ENCODE measurements at regions of chr6 and their contacts with region 1.

Region 1: DNA sequence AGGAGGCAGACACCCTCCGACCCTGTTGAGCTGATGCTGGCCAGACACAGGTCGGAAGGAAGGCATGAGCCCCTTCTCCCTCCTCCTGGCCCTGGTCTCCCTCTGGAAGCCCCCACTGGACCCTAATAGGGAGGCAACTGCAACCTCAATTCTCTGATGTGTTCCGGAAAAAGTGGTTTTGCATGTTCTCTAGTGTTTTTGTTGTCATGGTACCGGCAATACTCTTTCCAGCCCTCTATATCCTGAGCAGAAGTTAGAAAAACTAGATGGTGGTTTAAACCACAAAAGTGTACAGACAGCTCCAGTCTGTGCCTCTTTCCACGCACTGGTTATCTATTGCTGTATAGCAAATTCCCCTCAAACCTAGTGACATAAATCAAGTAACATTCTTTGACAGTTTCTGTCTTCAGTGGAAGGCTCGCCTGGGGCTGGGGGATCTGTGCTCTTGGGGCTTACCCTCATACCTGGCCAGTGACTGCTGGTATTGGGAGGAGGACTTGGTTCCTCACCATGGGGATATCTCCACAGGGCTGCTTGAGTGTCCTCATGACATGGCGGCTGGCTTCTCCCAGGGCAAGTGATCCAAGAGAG is 37.0 kb downstream of the SYTL3 start:
- DNase-seq: no peak
- ATAC-seq: peak in 2 of 4 donors; percentile 34 to 52
- H3K4me3 ChIP-seq: no peak overlapping the region
- H3K27ac ChIP-seq: no peak overlapping the region
- H3K4me1 ChIP-seq: no peaks in the 10 kb centered on the region
- H3K27me3 ChIP-seq: no peaks in the 10 kb centered on the region
- CTCF ChIP-seq: no peak

Region 2: DNA sequence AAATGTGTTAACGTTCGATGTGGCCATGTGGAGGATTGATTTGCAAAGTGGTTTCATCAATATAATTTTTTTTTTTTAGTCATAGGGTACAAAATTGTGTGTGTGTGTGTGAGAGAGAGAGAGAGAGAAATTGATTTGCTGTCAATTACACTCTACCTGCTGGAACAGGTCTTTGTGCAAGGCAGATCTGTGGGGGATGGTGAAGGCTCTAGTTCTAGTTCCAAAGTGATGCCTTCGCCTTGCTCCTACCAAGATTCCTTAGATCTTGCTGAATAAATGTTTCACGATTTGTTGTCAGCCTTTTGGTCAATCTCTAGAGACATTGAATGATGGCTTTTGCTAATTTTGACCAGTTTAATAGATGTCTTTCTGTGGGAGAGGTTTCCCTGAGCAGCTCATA is 583.7 kb before region 1 on chr6:
- intact Hi-C with region 1: no loop called
- DNase-seq: no peak
- ATAC-seq: peak in 3 of 4 donors; percentile 61 to 83 (median 75)
- H3K4me3 ChIP-seq: no peak overlapping the region
- H3K27ac ChIP-seq: no peak overlapping the region
- H3K4me1 ChIP-seq: peaks cover 0 to 15% (median 5%) of the 10 kb centered on the region in 3 donors
- H3K27me3 ChIP-seq: no peaks in the 10 kb centered on the region
- CTCF ChIP-seq: no peak

Region 3: DNA sequence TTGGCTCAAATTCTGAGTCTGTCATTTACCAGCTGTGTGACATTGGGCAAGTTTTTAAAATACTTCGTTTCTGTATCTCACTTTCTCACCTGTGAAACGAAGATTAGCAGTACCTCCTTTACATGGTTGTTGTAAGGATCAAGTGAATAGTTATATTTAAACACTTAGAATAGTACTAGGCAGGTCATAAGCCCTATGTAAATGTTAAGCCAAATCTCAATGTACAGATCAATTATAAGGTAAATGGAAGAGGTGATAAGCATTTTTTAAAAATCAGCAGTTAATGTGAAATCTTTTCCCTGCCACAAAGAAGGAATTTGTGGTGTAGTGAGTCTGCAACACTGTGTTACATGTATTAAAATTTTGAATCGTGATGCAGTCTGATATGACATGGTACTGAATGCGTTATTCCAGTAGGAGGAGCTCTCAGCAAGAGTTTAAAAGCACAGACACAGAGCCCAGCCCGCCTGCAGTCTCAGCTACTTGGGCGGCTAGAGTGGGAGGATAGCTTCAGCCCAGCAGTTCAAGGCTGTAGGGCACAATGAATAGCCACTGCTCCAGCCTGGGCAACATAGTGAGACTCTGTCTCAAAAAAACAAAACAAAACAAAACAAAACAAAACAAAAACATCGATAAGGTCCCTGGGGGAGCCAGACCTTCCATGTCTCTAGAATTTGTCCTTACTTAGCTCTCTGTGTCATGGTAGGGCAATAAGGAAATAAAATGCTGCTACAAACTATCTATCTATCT is 472.8 kb before region 1 on chr6:
- intact Hi-C with region 1: loop called in 1 of 3 experiments (anchors 10 kb)
- DNase-seq: peak; percentile 38 to 71 (median 49)
- ATAC-seq: peak; percentile 85 to 100 (median 99)
- H3K4me3 ChIP-seq: no peak overlapping the region
- H3K27ac ChIP-seq: no peak overlapping the region
- H3K4me1 ChIP-seq: no peaks in the 10 kb centered on the region
- H3K27me3 ChIP-seq: no peaks in the 10 kb centered on the region
- CTCF ChIP-seq: peak; percentile 23 to 60 (median 50)

Measured in pancreas (tissue), 10 donors.